ENCODE measurements at regions of chr14 and their contacts with region 1.

Region 1: GRCh38 chr14:55609681-55610080 is 29.7 kb downstream of the KTN1 start:
- DNase-seq: peak; percentile 61
- ATAC-seq: peak; percentile 81
- H3K4me3 ChIP-seq: no peak overlapping the region
- H3K27ac ChIP-seq: no peak overlapping the region
- H3K4me1 ChIP-seq: peaks cover 12% of the 10 kb centered on the region
- H3K27me3 ChIP-seq: no peaks in the 10 kb centered on the region
- CTCF ChIP-seq: no peak
- POLR2A ChIP-seq: no peak
- RAD21 ChIP-seq: no peak

Region 2: DNA sequence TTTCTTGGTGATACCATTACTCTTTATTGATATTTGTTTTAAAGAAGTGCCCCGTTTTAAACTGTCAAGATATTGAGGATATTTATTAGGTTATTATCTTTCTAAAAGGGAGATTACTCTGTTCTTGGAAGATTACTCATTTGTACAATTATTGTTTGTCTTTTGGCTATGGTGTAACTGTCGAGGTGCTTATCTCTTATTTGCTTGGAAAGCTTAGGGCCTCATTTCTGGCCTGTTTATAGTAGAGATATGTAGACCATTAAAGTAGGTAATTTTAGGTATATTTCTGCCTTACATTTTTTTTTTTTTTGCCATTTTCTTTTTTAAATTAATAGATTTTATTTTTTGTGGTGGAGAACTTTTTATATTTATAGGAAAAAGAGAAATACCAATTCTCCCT is 44.6 kb after region 1 on chr14:
- CTCF ChIA-PET with region 1: no interaction called
- POLR2A ChIA-PET with region 1: no interaction called
- dilution Hi-C with region 1: no loop called
- in situ Hi-C with region 1: no loop called
- intact Hi-C with region 1: loop called (anchors 5 kb)
- DNase-seq: no peak
- ATAC-seq: no peak
- H3K4me3 ChIP-seq: no peak overlapping the region
- H3K27ac ChIP-seq: no peak overlapping the region
- H3K4me1 ChIP-seq: no peaks in the 10 kb centered on the region
- H3K27me3 ChIP-seq: no peaks in the 10 kb centered on the region
- CTCF ChIP-seq: no peak
- POLR2A ChIP-seq: no peak
- RAD21 ChIP-seq: no peak

Measured in IMR-90 (cell line).